A673 (cell line): ENCODE measurements at regions of chr11 and their contacts with region 1.

Region 1: DNA sequence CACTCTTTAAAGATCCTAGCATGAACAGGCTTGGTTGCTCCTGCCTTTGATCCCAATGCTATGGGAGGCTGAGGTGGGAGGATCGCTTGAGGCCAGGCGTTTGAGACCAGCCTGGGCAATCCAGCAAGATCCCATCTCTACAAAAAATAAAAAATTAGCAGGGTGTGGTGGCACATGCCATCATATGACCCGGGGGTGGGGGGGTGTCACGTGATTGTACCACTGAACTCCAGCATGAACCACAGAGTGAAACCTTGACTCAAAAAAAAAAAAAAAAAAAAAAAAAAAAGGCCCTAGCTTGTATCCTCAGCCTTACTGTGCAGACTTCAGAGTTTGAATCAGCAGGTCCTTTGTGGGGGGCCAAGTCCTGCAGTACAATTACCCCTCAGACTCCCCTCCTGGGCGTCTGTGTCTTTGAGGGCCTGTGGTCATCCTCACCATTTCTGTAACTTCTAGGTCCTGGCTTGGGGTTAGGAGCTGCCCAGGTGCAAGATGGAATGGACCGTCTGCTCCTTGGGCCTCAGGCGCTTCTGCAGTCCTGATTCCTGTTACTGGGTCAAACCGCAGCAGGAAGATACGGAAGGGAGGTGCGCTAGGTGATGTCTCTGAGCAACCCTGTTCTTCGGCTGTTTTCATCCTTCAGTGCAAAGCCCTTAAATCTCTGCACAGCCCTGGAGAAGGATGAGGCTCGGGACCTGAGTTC is 208.1 kb downstream of the CTTN start:
- DNase-seq: no peak
- H3K4me3 ChIP-seq: no peak overlapping the region
- H3K27ac ChIP-seq: no peak overlapping the region
- H3K4me1 ChIP-seq: peaks cover 14% of the 10 kb centered on the region
- H3K27me3 ChIP-seq: no peaks in the 10 kb centered on the region
- CTCF ChIP-seq: no peak

Region 2: GRCh38 chr11:70251659-70252321 is 354.6 kb before region 1 on chr11:
- CTCF ChIA-PET with region 1: no interaction called
- POLR2A ChIA-PET with region 1: interaction called, 16 read pairs
- intact Hi-C with region 1: no loop called
- DNase-seq: no peak
- H3K4me3 ChIP-seq: no peak overlapping the region
- H3K27ac ChIP-seq: no peak overlapping the region
- H3K4me1 ChIP-seq: peaks cover 15% of the 10 kb centered on the region
- H3K27me3 ChIP-seq: no peaks in the 10 kb centered on the region
- CTCF ChIP-seq: no peak

Region 3: GRCh38 chr11:70568038-70568813 is 38.2 kb before region 1 on chr11:
- CTCF ChIA-PET with region 1: no interaction called
- POLR2A ChIA-PET with region 1: no interaction called
- intact Hi-C with region 1: no loop called
- DNase-seq: peak; percentile 58
- H3K4me3 ChIP-seq: peak overlapping the region; percentile 34
- H3K27ac ChIP-seq: peak overlapping the region; percentile 7
- H3K4me1 ChIP-seq: peaks cover 4% of the 10 kb centered on the region
- H3K27me3 ChIP-seq: no peaks in the 10 kb centered on the region
- CTCF ChIP-seq: no peak

Region 4: DNA sequence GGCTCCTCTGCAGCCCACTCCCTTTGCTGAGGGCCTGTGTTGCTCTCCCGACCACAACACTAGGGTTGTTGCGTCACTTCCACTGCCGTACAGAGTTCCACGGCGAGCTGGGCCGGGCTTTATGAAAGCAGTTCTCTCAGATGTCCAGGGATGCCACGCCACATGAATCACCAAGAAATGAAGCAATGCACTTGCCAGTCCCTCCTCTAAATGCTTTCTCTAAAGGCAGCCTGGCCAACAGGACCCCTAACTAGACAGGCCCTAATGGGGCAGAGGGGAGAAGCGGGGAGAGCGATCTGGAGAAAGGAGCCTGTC is 19.4 kb before region 1 on chr11:
- CTCF ChIA-PET with region 1: no interaction called
- POLR2A ChIA-PET with region 1: no interaction called
- intact Hi-C with region 1: no loop called
- DNase-seq: no peak
- H3K4me3 ChIP-seq: no peak overlapping the region
- H3K27ac ChIP-seq: no peak overlapping the region
- H3K4me1 ChIP-seq: no peaks in the 10 kb centered on the region
- H3K27me3 ChIP-seq: no peaks in the 10 kb centered on the region
- CTCF ChIP-seq: no peak

Region 5: GRCh38 chr11:71086675-71087258 is 480.4 kb after region 1 on chr11:
- CTCF ChIA-PET with region 1: no interaction called
- POLR2A ChIA-PET with region 1: no interaction called
- intact Hi-C with region 1: no loop called
- DNase-seq: peak; percentile 31
- H3K4me3 ChIP-seq: no peak overlapping the region
- H3K27ac ChIP-seq: no peak overlapping the region
- H3K4me1 ChIP-seq: no peaks in the 10 kb centered on the region
- H3K27me3 ChIP-seq: no peaks in the 10 kb centered on the region
- CTCF ChIP-seq: peak; percentile 68